ENCODE measurements at regions of chr2 and their contacts with region 1.

Region 1: DNA sequence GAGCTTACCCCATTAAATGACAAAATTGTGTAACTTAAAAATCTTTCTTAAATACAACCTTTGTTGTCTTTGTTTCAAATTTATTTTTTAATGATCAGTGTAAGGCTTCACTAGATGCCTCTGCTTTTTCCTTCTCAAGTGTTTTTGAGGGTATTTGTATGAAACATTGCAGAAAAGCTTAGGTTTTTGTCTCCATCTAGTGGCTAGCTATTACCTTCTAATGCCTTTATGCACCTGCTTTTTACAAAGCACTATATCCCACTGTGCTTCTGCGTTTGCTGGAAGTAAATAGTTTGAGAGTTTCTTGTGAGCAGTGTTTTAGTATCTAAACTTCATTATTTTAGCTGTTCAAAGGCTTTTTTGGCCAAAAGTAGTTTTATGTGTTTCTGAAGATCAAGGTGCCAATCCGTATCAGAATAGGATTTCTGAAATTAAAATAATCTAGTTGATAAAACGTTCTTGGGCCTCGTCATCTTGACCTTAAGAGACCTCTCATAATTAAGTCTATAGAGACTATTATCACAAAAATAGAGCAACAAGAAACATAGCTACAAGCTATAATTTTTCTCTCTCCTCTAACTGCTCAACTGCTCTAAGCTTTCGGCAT is 47.0 kb downstream of the IWS1 start:
- ATAC-seq: peak in 7 of 8 experiments; percentile 41 to 82 (median 72)
- H3K4me3 ChIP-seq: no peak overlapping the region
- H3K27ac ChIP-seq: no peak overlapping the region
- H3K4me1 ChIP-seq: no peaks in the 10 kb centered on the region

Region 2: DNA sequence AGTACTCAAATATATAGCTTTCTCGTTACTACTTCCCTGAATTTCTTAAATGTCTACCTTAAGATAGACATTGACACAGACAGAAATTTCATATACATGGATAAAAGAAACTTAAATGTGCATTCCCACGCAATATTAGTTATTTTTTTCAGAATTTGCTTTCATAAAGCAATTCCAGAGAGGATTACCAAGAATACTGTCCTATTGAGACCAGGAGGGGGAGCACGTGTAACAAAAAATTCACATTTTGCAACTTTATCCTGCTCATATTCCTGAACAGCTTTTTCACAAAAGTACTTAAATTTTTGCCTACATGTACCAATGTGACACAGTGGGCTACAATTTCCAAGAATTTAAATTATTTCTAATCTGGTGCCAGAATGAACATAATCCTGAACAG is 154.7 kb before region 1 on chr2:
- in situ Hi-C with region 1: loop called in 5 of 9 experiments (anchors 10 to 25 kb)
- ATAC-seq: peak in 3 of 8 experiments; percentile 49 to 64 (median 56)
- H3K4me3 ChIP-seq: no peak overlapping the region
- H3K27ac ChIP-seq: no peak overlapping the region
- H3K4me1 ChIP-seq: no peaks in the 10 kb centered on the region

Region 3: GRCh38 chr2:127637725-127638252 is 158.5 kb after region 1 on chr2:
- in situ Hi-C with region 1: no loop called
- ATAC-seq: peak; percentile 5 to 36 (median 18)
- H3K4me3 ChIP-seq: no peak overlapping the region
- H3K27ac ChIP-seq: no peak overlapping the region
- H3K4me1 ChIP-seq: peaks cover 15 to 19% of the 10 kb centered on the region in 2 donors

Measured in motor neuron (in vitro differentiated cells).